Activated naive CD4-positive, alpha-beta T cell treated with anti-CD3 and anti-CD28 coated beads for 36 hours (primary cell): ENCODE measurements at regions of chr16 and their contacts with region 1.

Region 1: GRCh38 chr16:8797364-8798173 is at the starts of genes PMM2 and TMEM186:
- DNase-seq: peak; percentile 96
- H3K4me3 Mint-ChIP-seq: peak within 1 kb of the TSS; percentile 95
- H3K27ac Mint-ChIP-seq: peak within 1 kb of the TSS; percentile 91
- H3K4me1 Mint-ChIP-seq: peaks cover 49% of the 10 kb centered on the region
- H3K27me3 Mint-ChIP-seq: no peaks in the 10 kb centered on the region
- total RNA-seq, gene PMM2: 20.1 to 20.8 TPM
- total RNA-seq, gene TMEM186: 12.1 to 12.6 TPM

Region 2: GRCh38 chr16:8621572-8622314 is 175.8 kb before region 1 on chr16 and contains the start of gene METTL22:
- CTCF ChIA-PET with region 1: no interaction called
- intact Hi-C with region 1: loop called (anchors 1 kb)
- DNase-seq: peak; percentile 92
- H3K4me3 Mint-ChIP-seq: peak within 1 kb of the TSS; percentile 97
- H3K27ac Mint-ChIP-seq: peak within 1 kb of the TSS; percentile 70
- H3K4me1 Mint-ChIP-seq: peaks cover 27% of the 10 kb centered on the region
- H3K27me3 Mint-ChIP-seq: no peaks in the 10 kb centered on the region
- total RNA-seq, gene METTL22: 43.2 to 48.4 TPM

Region 3: GRCh38 chr16:8674413-8675022 is 123.1 kb before region 1 on chr16 and contains the start of gene ABAT:
- CTCF ChIA-PET with region 1: no interaction called
- intact Hi-C with region 1: loop called (anchors 1 kb)
- DNase-seq: peak; percentile 85
- H3K4me3 Mint-ChIP-seq: peak within 1 kb of the TSS; percentile 79
- H3K27ac Mint-ChIP-seq: peak within 1 kb of the TSS; percentile 57
- H3K4me1 Mint-ChIP-seq: peaks cover 17% of the 10 kb centered on the region
- H3K27me3 Mint-ChIP-seq: no peaks in the 10 kb centered on the region
- total RNA-seq, gene ABAT: 2.7 to 3.1 TPM

Region 4: GRCh38 chr16:8720080-8720966 is 77.2 kb before region 1 on chr16:
- CTCF ChIA-PET with region 1: no interaction called
- intact Hi-C with region 1: no loop called
- DNase-seq: no peak
- H3K4me3 Mint-ChIP-seq: no peak overlapping the region
- H3K27ac Mint-ChIP-seq: no peak overlapping the region
- H3K4me1 Mint-ChIP-seq: peaks cover 2% of the 10 kb centered on the region
- H3K27me3 Mint-ChIP-seq: no peaks in the 10 kb centered on the region

Region 5: DNA sequence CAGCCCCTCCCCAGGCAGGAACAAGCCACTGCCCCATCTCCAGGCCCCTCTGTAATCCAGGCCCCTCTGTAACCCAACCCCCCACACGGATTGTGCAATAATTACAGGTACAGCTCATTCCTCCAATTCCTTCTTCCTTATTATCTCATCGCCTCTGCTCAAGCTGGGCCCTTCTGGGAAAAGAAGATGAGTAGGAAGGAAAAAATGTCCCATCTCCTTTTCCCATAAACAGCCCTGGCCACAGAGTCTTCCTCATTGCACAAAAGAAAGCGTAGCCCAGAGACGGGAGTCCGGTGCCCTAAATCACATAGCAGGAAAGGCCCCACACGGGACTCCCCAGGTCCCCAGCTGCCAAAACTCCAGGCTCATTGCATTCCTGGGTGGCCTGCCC is 80.9 kb after region 1 on chr16:
- CTCF ChIA-PET with region 1: interaction called, 3 read pairs
- intact Hi-C with region 1: loop called (anchors 2 kb)
- DNase-seq: no peak
- H3K4me3 Mint-ChIP-seq: no peak overlapping the region
- H3K27ac Mint-ChIP-seq: no peak overlapping the region
- H3K4me1 Mint-ChIP-seq: peaks cover 11% of the 10 kb centered on the region
- H3K27me3 Mint-ChIP-seq: no peaks in the 10 kb centered on the region

Region 6: GRCh38 chr16:9008601-9009260 is 211.2 kb after region 1 on chr16:
- CTCF ChIA-PET with region 1: no interaction called
- intact Hi-C with region 1: loop called (anchors 5 kb)
- DNase-seq: peak; percentile 78
- H3K4me3 Mint-ChIP-seq: no peak overlapping the region
- H3K27ac Mint-ChIP-seq: no peak overlapping the region
- H3K4me1 Mint-ChIP-seq: peaks cover 4% of the 10 kb centered on the region
- H3K27me3 Mint-ChIP-seq: peaks cover 9% of the 10 kb centered on the region

Region 7: DNA sequence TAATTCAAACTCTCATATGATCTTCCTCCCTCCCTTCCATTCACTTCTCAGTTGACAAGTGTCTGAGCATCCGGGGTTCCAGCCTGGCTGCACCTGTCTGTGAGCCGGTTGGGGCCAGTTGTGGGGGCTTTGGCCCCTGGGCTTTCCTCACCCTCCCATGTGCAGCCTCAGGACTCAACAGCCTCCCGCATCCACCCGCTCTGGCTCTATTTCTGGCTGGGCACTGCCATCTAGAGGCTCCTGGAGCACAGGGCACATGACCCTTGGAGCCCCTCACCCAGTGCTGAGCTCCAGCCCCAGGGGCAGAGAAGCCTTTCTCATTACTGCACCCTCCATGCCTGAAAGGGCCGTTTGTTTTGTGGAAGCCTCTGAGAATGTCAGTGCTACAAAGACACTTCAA is 337.2 kb after region 1 on chr16:
- CTCF ChIA-PET with region 1: no interaction called
- intact Hi-C with region 1: loop called (anchors 1 kb)
- DNase-seq: peak; percentile 85
- H3K4me3 Mint-ChIP-seq: no peak overlapping the region
- H3K27ac Mint-ChIP-seq: no peak overlapping the region
- H3K4me1 Mint-ChIP-seq: peaks cover 7% of the 10 kb centered on the region
- H3K27me3 Mint-ChIP-seq: peaks cover 4% of the 10 kb centered on the region